Caco-2 (cell line): ENCODE measurements at regions of chrX and their contacts with region 1.

Region 1: GRCh38 chrX:138775517-138775916 is 64.0 kb upstream of the FGF13 start:
- DNase-seq: peak in 1 of 2 experiments; percentile 1
- H3K4me3 ChIP-seq: no peak overlapping the region
- H3K4me3 Mint-ChIP-seq: no peak overlapping the region
- H3K27ac Mint-ChIP-seq: no peak overlapping the region
- H3K4me1 ChIP-seq: no peaks in the 10 kb centered on the region
- H3K4me1 Mint-ChIP-seq: no peaks in the 10 kb centered on the region
- H3K27me3 ChIP-seq: no peaks in the 10 kb centered on the region
- H3K27me3 Mint-ChIP-seq: no peaks in the 10 kb centered on the region
- CTCF ChIP-seq: peak in 1 of 2 experiments; percentile 32

Region 2: GRCh38 chrX:139971394-139971749 is 1195.9 kb after region 1 on chrX:
- CTCF ChIA-PET with region 1: no interaction called
- POLR2A ChIA-PET with region 1: no interaction called
- intact Hi-C with region 1: loop called (anchors 10 kb)
- DNase-seq: no peak
- H3K4me3 ChIP-seq: no peak overlapping the region
- H3K4me3 Mint-ChIP-seq: no peak overlapping the region
- H3K27ac Mint-ChIP-seq: no peak overlapping the region
- H3K4me1 ChIP-seq: no peaks in the 10 kb centered on the region
- H3K4me1 Mint-ChIP-seq: no peaks in the 10 kb centered on the region
- H3K27me3 ChIP-seq: no peaks in the 10 kb centered on the region
- H3K27me3 Mint-ChIP-seq: peaks cover 3% of the 10 kb centered on the region
- CTCF ChIP-seq: no peak